B cell (primary cell): ENCODE measurements at regions of chr2 and their contacts with region 1.

Region 1: GRCh38 chr2:69914170-69914960 is 544 bp upstream of the MXD1 start:
- DNase-seq: peak; percentile 100
- ATAC-seq: peak; percentile 89
- H3K4me3 ChIP-seq: peak overlapping the region; percentile 63 to 94 (median 80)
- H3K4me3 Mint-ChIP-seq: peak overlapping the region; percentile 82
- H3K27ac ChIP-seq: peak overlapping the region; percentile 93 to 97
- H3K27ac Mint-ChIP-seq: peak overlapping the region; percentile 79
- H3K4me1 ChIP-seq: peaks cover 18% of the 10 kb centered on the region in 2 donors
- H3K4me1 Mint-ChIP-seq: peaks cover 29% of the 10 kb centered on the region
- H3K27me3 ChIP-seq: no peaks in the 10 kb centered on the region
- H3K27me3 Mint-ChIP-seq: no peaks in the 10 kb centered on the region
- CTCF ChIP-seq: no peak

Region 2: DNA sequence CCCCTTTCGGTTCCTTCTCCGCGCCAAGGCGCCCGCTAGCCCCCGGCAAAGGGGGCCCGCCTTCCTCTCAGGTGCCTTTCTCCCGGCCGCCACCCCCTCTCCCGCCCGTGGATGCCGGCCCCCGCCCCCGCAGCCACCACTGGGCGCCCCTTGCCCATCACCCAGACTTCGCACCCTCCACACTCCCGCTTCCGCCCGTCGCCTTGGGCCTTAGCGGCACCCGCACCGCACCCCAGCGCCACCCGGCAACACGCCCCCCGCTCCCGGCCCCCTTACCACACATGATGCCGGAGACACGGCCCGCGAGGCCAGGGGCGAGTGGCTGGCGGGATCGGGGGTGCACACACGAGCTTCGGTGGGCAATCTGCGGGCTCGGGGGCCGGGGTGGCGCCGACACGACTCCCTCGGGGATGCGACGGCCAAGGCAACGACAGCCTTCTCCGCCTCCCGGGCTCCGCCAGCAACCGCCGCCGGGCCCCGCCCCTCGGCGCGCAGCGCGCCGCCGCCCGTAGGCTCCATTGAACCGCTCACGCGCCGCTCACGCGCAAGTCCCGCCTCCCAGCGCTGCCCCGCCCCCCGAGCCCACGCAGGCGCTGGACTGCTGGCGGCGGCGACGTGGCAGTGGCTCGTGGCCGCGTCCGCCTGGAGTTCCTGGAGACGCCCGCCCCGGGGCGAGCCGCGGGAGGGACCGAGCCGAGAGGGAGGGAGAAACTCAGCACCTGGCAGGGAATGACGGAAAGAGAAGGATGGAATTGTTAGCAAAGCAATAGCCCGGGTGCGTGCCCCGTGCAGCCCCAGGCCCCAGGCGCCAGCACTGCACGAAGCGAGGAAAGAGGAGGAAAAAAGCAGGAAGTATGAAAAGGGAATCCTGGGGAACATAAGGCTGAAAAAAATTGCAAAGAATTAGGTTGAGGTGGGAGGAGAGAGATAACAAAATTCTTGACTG is 527.3 kb before region 1 on chr2 and contains the start of gene GFPT1:
- CTCF ChIA-PET with region 1: no interaction called
- POLR2A ChIA-PET with region 1: no interaction called
- intact Hi-C with region 1: loop called (anchors 2 kb)
- DNase-seq: peak; percentile 94
- ATAC-seq: peak; percentile 97
- H3K4me3 ChIP-seq: peak within 1 kb of the TSS; percentile 52 to 90 (median 82)
- H3K4me3 Mint-ChIP-seq: peak within 1 kb of the TSS; percentile 90
- H3K27ac ChIP-seq: peak within 1 kb of the TSS; percentile 62 to 70
- H3K27ac Mint-ChIP-seq: peak within 1 kb of the TSS; percentile 85
- H3K4me1 ChIP-seq: peaks cover 15 to 16% of the 10 kb centered on the region in 2 donors
- H3K4me1 Mint-ChIP-seq: peaks cover 30% of the 10 kb centered on the region
- H3K27me3 ChIP-seq: no peaks in the 10 kb centered on the region
- H3K27me3 Mint-ChIP-seq: no peaks in the 10 kb centered on the region
- CTCF ChIP-seq: no peak
- total RNA-seq, gene GFPT1: 15.0 and 18.1 TPM in 2 replicates

Region 3: GRCh38 chr2:69902213-69902922 is 12.0 kb before region 1 on chr2:
- CTCF ChIA-PET with region 1: interaction called, 14 read pairs
- POLR2A ChIA-PET with region 1: interaction called, 3 read pairs
- intact Hi-C with region 1: loop called (anchors 1 kb)
- DNase-seq: peak; percentile 86
- ATAC-seq: peak; percentile 83
- H3K4me3 ChIP-seq: peak overlapping the region; percentile 16 to 55 (median 47)
- H3K4me3 Mint-ChIP-seq: peak overlapping the region; percentile 71
- H3K27ac ChIP-seq: peak overlapping the region; percentile 72 to 74
- H3K27ac Mint-ChIP-seq: peak overlapping the region; percentile 89
- H3K4me1 ChIP-seq: peaks cover 27 to 29% of the 10 kb centered on the region in 2 donors
- H3K4me1 Mint-ChIP-seq: peaks cover 36% of the 10 kb centered on the region
- H3K27me3 ChIP-seq: no peaks in the 10 kb centered on the region
- H3K27me3 Mint-ChIP-seq: no peaks in the 10 kb centered on the region
- CTCF ChIP-seq: no peak

Region 4: GRCh38 chr2:70078384-70078783 is 164.0 kb after region 1 on chr2:
- CTCF ChIA-PET with region 1: interaction called, 51 read pairs
- POLR2A ChIA-PET with region 1: interaction called, 60 read pairs
- intact Hi-C with region 1: no loop called
- DNase-seq: no peak
- ATAC-seq: no peak
- H3K4me3 ChIP-seq: no peak overlapping the region
- H3K4me3 Mint-ChIP-seq: no peak overlapping the region
- H3K27ac ChIP-seq: no peak overlapping the region
- H3K27ac Mint-ChIP-seq: no peak overlapping the region
- H3K4me1 ChIP-seq: peaks cover 6 to 7% of the 10 kb centered on the region in 2 donors
- H3K4me1 Mint-ChIP-seq: peaks cover 6% of the 10 kb centered on the region
- H3K27me3 ChIP-seq: no peaks in the 10 kb centered on the region
- H3K27me3 Mint-ChIP-seq: no peaks in the 10 kb centered on the region
- CTCF ChIP-seq: no peak

Region 5: GRCh38 chr2:70124983-70125480 is 210.7 kb after region 1 on chr2:
- CTCF ChIA-PET with region 1: interaction called, 7 read pairs
- POLR2A ChIA-PET with region 1: interaction called, 19 read pairs
- intact Hi-C with region 1: no loop called
- DNase-seq: peak; percentile 95
- ATAC-seq: peak; percentile 66
- H3K4me3 ChIP-seq: peak overlapping the region; percentile 32 to 99 (median 71)
- H3K4me3 Mint-ChIP-seq: peak overlapping the region; percentile 95
- H3K27ac ChIP-seq: peak overlapping the region; percentile 100
- H3K27ac Mint-ChIP-seq: peak overlapping the region; percentile 100
- H3K4me1 ChIP-seq: peaks cover 63 to 71% of the 10 kb centered on the region in 2 donors
- H3K4me1 Mint-ChIP-seq: peaks cover 65% of the 10 kb centered on the region
- H3K27me3 ChIP-seq: no peaks in the 10 kb centered on the region
- H3K27me3 Mint-ChIP-seq: no peaks in the 10 kb centered on the region
- CTCF ChIP-seq: no peak

Region 6: GRCh38 chr2:70142590-70143313 is 228.4 kb after region 1 on chr2:
- CTCF ChIA-PET with region 1: interaction called, 105 read pairs
- POLR2A ChIA-PET with region 1: interaction called, 45 read pairs
- intact Hi-C with region 1: loop called (anchors 1 kb)
- DNase-seq: peak; percentile 100
- ATAC-seq: peak; percentile 75
- H3K4me3 ChIP-seq: peak overlapping the region; percentile 61 to 91 (median 71)
- H3K4me3 Mint-ChIP-seq: peak overlapping the region; percentile 91
- H3K27ac ChIP-seq: peak overlapping the region; percentile 97 to 98
- H3K27ac Mint-ChIP-seq: peak overlapping the region; percentile 98
- H3K4me1 ChIP-seq: peaks cover 24 to 32% of the 10 kb centered on the region in 2 donors
- H3K4me1 Mint-ChIP-seq: peaks cover 50% of the 10 kb centered on the region
- H3K27me3 ChIP-seq: no peaks in the 10 kb centered on the region
- H3K27me3 Mint-ChIP-seq: no peaks in the 10 kb centered on the region
- CTCF ChIP-seq: peak; percentile 88

Region 7: DNA sequence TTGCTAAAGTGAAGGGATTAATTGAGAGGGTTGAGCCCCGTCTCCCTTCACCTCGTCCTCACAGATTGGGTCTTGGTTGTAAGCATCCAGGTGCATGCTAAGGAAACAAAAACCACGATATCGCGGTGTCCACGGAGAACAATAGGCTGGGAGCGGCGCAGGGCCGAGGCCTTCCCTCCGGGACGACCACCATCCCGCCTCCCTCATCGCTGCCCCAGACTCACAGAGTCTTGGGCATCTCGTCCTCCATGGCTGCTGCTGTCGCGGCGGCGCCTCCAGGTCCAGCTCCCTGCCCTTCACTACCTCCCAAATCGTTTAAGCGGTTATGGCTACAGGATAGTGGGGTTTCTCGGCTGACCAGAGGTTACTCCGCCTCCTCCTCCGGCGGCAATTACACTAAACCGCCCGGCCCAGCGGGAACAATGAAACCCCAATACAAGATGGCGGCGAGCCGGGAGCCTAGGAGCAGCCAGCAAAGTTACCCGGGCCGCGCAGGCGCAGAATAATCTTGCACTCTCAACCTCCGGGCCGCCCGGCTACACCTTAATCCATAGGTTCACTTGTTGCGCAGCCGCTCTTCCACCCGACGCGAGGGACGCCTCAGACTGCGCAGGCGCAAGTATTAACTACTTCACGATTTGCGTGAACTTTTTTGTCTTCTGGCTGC is 333.9 kb after region 1 on chr2 and contains the start of gene TIA1:
- CTCF ChIA-PET with region 1: interaction called, 10 read pairs
- POLR2A ChIA-PET with region 1: no interaction called
- intact Hi-C with region 1: loop called (anchors 1 kb)
- DNase-seq: peak; percentile 99
- ATAC-seq: peak; percentile 96
- H3K4me3 ChIP-seq: peak within 1 kb of the TSS; percentile 70 to 98 (median 95)
- H3K4me3 Mint-ChIP-seq: peak within 1 kb of the TSS; percentile 98
- H3K27ac ChIP-seq: peak within 1 kb of the TSS; percentile 86 to 94
- H3K27ac Mint-ChIP-seq: peak within 1 kb of the TSS; percentile 98
- H3K4me1 ChIP-seq: peaks cover 24 to 29% of the 10 kb centered on the region in 2 donors
- H3K4me1 Mint-ChIP-seq: peaks cover 35% of the 10 kb centered on the region
- H3K27me3 ChIP-seq: no peaks in the 10 kb centered on the region
- H3K27me3 Mint-ChIP-seq: no peaks in the 10 kb centered on the region
- CTCF ChIP-seq: no peak
- total RNA-seq, gene TIA1: 214 and 243 TPM in 2 replicates